A549 (cell line): ENCODE measurements at regions of chr9 and their contacts with region 1.

Region 1: GRCh38 chr9:132575005-132575609 is 7.3 kb upstream of the BARHL1 start:
- DNase-seq: peak; percentile 75 to 88
- ATAC-seq: peak; percentile 88 to 95
- H3K4me3 ChIP-seq: no peak overlapping the region
- H3K27ac ChIP-seq: no peak overlapping the region
- H3K4me1 ChIP-seq: no peaks in the 10 kb centered on the region
- CTCF ChIP-seq: peak; percentile 84
- EP300 ChIP-seq: no peak
- POLR2A ChIP-seq: no peak
- RAD21 ChIP-seq: peak; percentile 94 to 96

Region 2: GRCh38 chr9:132283863-132284262 is 291.2 kb before region 1 on chr9:
- CTCF ChIA-PET with region 1: no interaction called
- POLR2A ChIA-PET with region 1: no interaction called
- DNase-seq: no peak
- ATAC-seq: peak in 1 of 2 experiments; percentile 43; a peak in 3 of 6 replicates
- H3K4me3 ChIP-seq: no peak overlapping the region
- H3K27ac ChIP-seq: no peak overlapping the region
- H3K4me1 ChIP-seq: no peaks in the 10 kb centered on the region
- CTCF ChIP-seq: no peak
- EP300 ChIP-seq: no peak
- POLR2A ChIP-seq: no peak
- RAD21 ChIP-seq: no peak

Region 3: DNA sequence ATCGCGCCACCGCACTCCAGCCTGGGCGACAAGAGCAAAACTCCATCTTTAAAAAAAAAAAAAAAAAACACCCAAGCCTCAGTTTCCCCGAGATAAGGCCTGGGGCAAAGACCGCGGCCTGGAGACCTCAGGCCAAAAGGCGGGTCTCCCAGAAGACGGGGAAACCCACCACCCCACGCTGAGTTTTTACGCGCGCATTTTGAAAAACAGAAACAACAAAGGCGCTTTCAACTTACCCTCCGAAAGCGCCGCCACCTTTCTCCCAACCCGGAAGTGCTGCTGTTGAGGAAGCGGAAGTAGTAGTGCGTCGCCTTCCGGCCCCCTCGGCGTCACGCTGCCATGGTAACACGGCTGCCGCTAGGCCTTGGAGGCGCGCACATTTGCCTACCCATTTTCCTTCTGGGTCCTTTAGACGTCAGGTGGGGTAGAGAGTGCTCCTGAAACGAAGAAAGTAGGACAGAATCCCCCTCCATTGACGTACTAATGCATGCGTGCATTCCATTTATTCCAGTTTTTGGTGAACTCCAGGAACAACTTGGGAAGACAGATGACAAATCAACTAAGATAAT is 168.5 kb before region 1 on chr9 and contains the start of gene TTF1:
- CTCF ChIA-PET with region 1: interaction called, 28 read pairs
- POLR2A ChIA-PET with region 1: no interaction called
- DNase-seq: peak; percentile 92 to 94
- ATAC-seq: peak; percentile 90
- H3K4me3 ChIP-seq: peak within 1 kb of the TSS; percentile 63
- H3K27ac ChIP-seq: peak within 1 kb of the TSS; percentile 70 to 92
- H3K4me1 ChIP-seq: peaks cover 15% of the 10 kb centered on the region
- CTCF ChIP-seq: no peak
- EP300 ChIP-seq: no peak
- POLR2A ChIP-seq: peak; percentile 69
- RAD21 ChIP-seq: no peak
- polyA plus RNA-seq, gene TTF1: 12.8 and 16.0 TPM in 2 replicates

Region 4: GRCh38 chr9:132498531-132499210 is 76.4 kb before region 1 on chr9:
- CTCF ChIA-PET with region 1: interaction called, 176 read pairs
- POLR2A ChIA-PET with region 1: no interaction called
- DNase-seq: no peak
- ATAC-seq: no peak; a peak in 2 of 6 replicates
- H3K4me3 ChIP-seq: no peak overlapping the region
- H3K27ac ChIP-seq: no peak overlapping the region
- H3K4me1 ChIP-seq: no peaks in the 10 kb centered on the region
- CTCF ChIP-seq: no peak
- EP300 ChIP-seq: no peak
- POLR2A ChIP-seq: no peak
- RAD21 ChIP-seq: no peak

Region 5: DNA sequence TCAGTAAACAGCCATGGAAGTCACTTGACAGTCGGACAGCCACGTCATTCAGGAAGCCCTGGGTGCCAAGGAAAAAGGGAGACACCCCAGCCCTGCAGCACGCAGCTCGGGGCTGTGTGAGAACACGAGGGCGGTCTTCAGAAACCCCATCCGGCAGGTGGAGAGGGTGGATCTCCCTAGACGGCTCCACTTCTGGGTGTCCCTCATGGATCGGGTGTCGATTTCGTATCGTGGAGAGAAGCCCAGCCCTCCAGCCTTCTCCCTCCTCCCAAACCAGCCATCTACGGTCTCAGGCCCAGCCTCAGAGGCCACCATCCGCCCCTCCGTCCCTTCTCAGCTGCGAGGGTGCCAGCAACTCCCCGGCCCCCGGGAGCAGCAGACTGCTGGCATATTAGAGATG is 58.2 kb before region 1 on chr9:
- CTCF ChIA-PET with region 1: interaction called, 176 read pairs
- POLR2A ChIA-PET with region 1: no interaction called
- DNase-seq: no peak
- ATAC-seq: no peak
- H3K4me3 ChIP-seq: no peak overlapping the region
- H3K27ac ChIP-seq: no peak overlapping the region
- H3K4me1 ChIP-seq: no peaks in the 10 kb centered on the region
- CTCF ChIP-seq: no peak
- EP300 ChIP-seq: no peak
- POLR2A ChIP-seq: no peak
- RAD21 ChIP-seq: no peak

Region 6: GRCh38 chr9:132560616-132561202 is 14.4 kb before region 1 on chr9:
- CTCF ChIA-PET with region 1: interaction called, 25 read pairs
- POLR2A ChIA-PET with region 1: no interaction called
- DNase-seq: no peak
- ATAC-seq: no peak; a peak in 1 of 6 replicates
- H3K4me3 ChIP-seq: no peak overlapping the region
- H3K27ac ChIP-seq: no peak overlapping the region
- H3K4me1 ChIP-seq: no peaks in the 10 kb centered on the region
- CTCF ChIP-seq: no peak
- EP300 ChIP-seq: no peak
- POLR2A ChIP-seq: no peak
- RAD21 ChIP-seq: no peak

Region 7: DNA sequence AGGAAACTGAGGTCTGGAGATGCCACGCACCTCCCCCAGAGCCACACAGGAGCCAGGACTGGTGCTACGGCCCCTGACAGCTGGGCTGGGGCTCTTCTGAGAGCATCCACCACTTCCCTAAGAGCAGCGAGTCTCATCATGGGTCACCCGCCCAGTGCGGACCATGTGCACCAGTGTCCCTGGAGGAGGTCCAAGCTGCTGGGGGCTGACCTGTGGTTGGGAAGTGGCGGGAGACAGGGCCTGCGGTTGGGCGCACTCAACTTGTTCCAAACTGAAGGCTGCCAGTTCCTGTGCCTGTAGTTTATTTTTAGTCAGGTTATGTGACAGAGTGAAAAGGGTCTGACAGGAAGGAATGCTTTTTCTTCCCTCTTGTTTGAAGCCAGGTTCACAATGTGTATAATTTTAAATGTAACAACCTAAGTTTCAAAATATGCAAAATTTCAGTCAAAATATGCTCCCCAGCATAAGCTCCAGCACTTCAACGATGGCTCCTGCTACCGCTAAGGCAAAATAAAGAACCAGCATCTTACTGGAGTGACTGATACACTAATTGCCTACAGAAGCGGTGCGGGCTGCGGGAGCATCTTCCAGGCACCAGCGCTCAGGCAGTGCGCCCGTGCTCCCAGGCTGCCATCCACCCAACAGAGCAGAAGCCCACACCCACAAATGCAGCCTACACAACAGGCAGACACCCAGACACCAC is 22.1 kb after region 1 on chr9:
- CTCF ChIA-PET with region 1: interaction called, 15 read pairs
- POLR2A ChIA-PET with region 1: no interaction called
- DNase-seq: no peak
- ATAC-seq: no peak
- H3K4me3 ChIP-seq: no peak overlapping the region
- H3K27ac ChIP-seq: no peak overlapping the region
- H3K4me1 ChIP-seq: no peaks in the 10 kb centered on the region
- CTCF ChIP-seq: no peak
- EP300 ChIP-seq: no peak
- POLR2A ChIP-seq: no peak
- RAD21 ChIP-seq: no peak